ENCODE measurements at regions of chr9 and their contacts with region 1.

Region 1: GRCh38 chr9:19048966-19049916 is at the start of gene RRAGA:
- DNase-seq: peak; percentile 97
- CTCF ChIP-seq: peak; percentile 73

Region 2: DNA sequence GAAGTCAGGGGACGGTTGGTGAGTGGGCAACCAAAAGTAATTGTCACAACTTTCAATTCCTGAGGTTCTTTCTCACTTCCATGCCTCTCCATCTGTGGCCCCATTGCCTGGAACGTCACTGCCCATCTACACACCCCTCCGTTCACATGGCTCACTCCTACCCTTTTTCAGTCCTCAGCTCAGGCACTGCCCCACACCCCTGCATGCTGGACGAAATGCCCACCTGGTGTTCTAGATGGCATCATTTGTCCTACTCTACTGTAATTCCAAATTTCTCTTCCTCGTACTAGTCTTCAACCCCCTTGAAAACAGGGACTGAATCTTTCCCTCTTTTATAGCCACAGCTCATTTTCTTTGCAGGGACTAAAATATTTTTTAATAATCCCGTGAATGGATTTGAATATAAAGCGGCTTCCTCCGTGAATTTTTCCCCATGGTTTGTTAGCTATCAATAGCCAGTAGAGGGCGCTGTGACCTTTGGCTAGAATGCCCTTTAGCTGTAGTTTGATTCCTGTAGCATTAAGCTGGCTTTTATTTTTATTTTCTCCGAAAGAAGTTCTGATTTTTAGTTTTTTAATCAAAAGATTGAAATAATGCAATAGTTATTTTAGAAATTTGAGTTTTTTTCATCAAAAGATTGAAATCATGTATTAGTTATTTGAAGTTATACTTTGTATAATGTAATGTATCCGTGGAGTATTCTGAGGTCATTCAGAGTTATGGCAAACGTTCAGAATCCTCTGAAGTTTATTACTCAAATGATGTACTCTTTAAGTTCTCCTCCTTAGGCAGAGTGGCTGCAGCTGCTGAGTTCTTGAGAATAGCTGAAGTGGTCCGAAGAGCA is 1238.3 kb before region 1 on chr9:
- in situ Hi-C with region 1: loop called (anchors 25 kb)
- DNase-seq: peak; percentile 45
- CTCF ChIP-seq: peak; percentile 69

Region 3: GRCh38 chr9:18442629-18443491 is 606.4 kb before region 1 on chr9:
- in situ Hi-C with region 1: no loop called
- DNase-seq: peak; percentile 57
- CTCF ChIP-seq: peak; percentile 93

Region 4: GRCh38 chr9:19174127-19174912 is 125.1 kb after region 1 on chr9:
- in situ Hi-C with region 1: loop called (anchors 10 kb)
- DNase-seq: peak; percentile 77
- CTCF ChIP-seq: peak; percentile 11

Region 5: GRCh38 chr9:19216466-19216865 is 167.2 kb after region 1 on chr9:
- in situ Hi-C with region 1: no loop called
- DNase-seq: no peak
- CTCF ChIP-seq: no peak

Region 6: GRCh38 chr9:19456996-19457692 is 407.9 kb after region 1 on chr9:
- in situ Hi-C with region 1: loop called (anchors 25 kb)
- DNase-seq: peak; percentile 66
- CTCF ChIP-seq: peak; percentile 79